GM13977 (cell line): ENCODE measurements at regions of chr5 and their contacts with region 1.

Region 1: GRCh38 chr5:72307968-72308852 is 11.8 kb downstream of the MRPS27 start:
- DNase-seq: peak; percentile 97
- CTCF ChIP-seq: peak; percentile 93

Region 2: GRCh38 chr5:71782771-71783770 is 525.1 kb before region 1 on chr5:
- in situ Hi-C with region 1: loop called (anchors 25 kb)
- DNase-seq: peak; percentile 68
- CTCF ChIP-seq: peak; percentile 88

Region 3: DNA sequence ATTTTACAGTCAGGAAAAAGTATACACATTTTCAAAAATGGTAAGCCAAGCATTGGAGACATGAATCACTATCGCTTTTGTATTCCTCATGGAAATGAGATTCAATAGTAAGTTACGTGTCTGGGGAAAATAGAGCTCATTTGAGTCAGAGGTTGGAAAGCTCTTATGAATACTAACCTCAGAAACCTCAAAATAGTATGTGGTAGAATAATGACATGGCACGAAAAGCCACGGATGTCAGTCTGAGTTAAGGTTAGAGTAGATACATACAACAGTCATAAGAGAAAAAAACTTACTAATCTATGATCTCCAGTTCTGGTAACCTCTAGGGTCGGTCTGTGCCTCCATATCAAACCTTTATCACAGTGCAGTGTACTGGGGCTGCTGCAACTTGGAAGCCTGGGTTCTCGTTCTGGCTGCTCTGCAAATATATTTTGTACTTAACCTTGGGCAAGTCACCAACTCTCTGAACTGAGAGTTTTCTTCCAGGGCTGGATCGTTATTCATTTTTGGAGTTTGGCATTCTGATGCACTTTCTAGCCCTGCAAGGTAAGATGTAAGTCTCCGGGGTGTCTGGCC is 169.2 kb before region 1 on chr5:
- in situ Hi-C with region 1: loop called (anchors 10 kb)
- DNase-seq: no peak
- CTCF ChIP-seq: no peak

Region 4: GRCh38 chr5:72552041-72552557 is 243.9 kb after region 1 on chr5:
- in situ Hi-C with region 1: no loop called
- DNase-seq: no peak
- CTCF ChIP-seq: no peak

Region 5: DNA sequence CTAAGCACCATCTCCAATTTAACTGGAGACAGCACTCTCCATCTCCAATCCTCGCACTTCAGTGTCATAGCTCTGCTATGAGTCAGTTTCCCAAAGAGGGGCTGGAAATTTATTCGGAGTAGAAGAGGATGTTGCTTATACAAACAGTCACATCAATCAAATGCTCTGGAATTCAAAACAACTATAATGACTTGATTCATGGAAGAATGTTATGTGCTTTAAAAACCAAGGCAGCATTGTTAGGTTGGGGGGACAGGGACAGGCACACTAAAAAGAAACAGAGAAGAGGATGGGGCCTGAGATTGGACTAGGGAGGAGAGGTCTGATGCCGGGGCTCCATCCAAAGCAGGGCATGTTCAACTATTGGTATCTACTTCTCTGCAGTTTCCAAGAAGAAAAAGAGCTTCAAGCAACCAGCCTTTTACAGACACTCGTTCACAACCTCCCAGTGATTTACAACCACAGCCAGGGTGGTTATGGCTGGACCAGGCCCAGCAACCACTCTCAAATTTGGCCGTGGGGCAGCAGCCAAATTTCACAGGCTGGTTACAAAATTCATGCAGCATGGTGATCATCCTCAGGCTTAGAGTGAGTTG is 316.5 kb after region 1 on chr5:
- in situ Hi-C with region 1: no loop called
- DNase-seq: no peak
- CTCF ChIP-seq: no peak